Activated CD4-positive, alpha-beta memory T cell treated with anti-CD3 and anti-CD28 coated beads for 36 hours (primary cell): ENCODE measurements at regions of chr1 and their contacts with region 1.

Region 1: DNA sequence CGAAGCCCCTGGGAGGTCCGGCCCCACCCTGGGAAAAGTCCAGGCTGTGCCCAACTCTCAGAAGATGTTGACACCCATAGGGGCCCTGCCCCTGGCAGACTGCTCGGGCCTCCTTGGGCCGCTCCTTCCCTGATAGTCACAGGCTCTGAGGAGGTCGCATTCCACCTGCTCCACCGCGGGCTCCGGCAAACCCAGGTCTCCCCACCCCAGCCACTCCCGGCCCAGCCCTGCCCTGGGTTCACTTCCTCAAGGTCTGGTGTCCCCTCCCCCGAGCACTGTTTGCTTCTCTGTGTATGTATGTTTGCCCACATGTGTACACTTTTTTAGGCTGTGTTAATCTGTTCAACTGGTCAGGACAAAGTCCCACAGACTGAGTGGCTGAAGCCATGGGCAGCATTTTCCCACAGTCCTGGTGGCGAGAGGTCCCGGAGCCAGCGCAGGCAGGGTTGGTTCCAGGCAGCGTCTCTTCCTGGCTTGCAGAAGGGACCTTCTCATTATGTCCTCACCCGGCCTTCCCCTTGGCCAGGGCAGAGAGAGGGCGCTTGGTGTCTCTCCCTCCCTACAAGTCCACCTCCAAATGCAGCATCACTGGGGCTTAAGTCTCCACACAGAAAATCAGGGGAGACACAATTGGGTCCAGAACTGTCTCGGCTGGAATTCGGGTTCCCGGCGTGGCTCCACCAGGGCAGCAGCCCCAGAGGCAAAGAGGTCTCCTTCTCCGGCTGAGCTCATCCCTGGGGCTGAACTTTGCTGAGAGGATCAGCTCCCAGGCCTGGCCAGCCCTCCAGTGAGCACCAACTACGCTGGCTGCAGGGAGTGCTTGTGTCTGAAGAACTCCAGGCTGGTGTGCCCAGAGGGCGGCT is 10.5 kb upstream of the PRXL2B start:
- DNase-seq: no peak
- H3K4me3 Mint-ChIP-seq: no peak overlapping the region
- H3K27ac Mint-ChIP-seq: peak overlapping the region; percentile 97
- H3K4me1 Mint-ChIP-seq: peaks cover 39% of the 10 kb centered on the region
- H3K27me3 Mint-ChIP-seq: no peaks in the 10 kb centered on the region

Region 2: GRCh38 chr1:2391041-2391930 is 184.7 kb before region 1 on chr1 and contains the starts of genes MORN1 and RER1:
- CTCF ChIA-PET with region 1: no interaction called
- POLR2A ChIA-PET with region 1: no interaction called
- intact Hi-C with region 1: no loop called
- DNase-seq: peak; percentile 99
- H3K4me3 Mint-ChIP-seq: peak within 1 kb of the TSS; percentile 93
- H3K27ac Mint-ChIP-seq: peak within 1 kb of the TSS; percentile 84
- H3K4me1 Mint-ChIP-seq: peaks cover 39% of the 10 kb centered on the region
- H3K27me3 Mint-ChIP-seq: no peaks in the 10 kb centered on the region
- total RNA-seq, gene MORN1: 5.4 to 6.3 TPM
- total RNA-seq, gene RER1: 148 to 154 TPM

Region 3: DNA sequence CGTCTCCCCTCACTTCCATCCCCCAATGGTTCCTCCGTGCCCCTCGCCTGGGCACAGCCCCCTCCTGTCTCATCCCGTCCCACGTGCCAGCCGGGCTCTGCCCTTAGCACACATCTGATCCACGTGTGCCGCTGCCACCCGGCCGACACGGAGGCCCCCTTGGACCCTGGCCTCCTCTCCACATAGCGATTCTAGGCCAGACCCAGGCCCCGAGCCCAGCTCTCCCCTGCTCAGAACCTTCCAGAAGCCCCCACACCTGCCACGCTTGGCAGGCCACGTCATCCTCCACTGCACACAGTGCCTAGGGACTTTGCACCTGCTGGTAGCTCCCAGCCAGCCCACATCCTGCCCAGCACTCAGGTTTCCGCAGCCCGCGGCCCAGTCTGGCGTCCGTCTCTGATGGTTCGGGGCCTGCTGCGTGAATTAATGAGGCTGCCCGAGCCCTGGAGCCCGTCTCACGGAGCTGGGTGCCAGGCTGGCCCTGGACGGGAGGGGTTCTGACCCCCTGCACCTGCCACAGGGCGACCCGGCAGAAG is 79.9 kb before region 1 on chr1:
- CTCF ChIA-PET with region 1: no interaction called
- POLR2A ChIA-PET with region 1: no interaction called
- intact Hi-C with region 1: no loop called
- DNase-seq: peak; percentile 30
- H3K4me3 Mint-ChIP-seq: no peak overlapping the region
- H3K27ac Mint-ChIP-seq: no peak overlapping the region
- H3K4me1 Mint-ChIP-seq: peaks cover 27% of the 10 kb centered on the region
- H3K27me3 Mint-ChIP-seq: no peaks in the 10 kb centered on the region

Region 4: DNA sequence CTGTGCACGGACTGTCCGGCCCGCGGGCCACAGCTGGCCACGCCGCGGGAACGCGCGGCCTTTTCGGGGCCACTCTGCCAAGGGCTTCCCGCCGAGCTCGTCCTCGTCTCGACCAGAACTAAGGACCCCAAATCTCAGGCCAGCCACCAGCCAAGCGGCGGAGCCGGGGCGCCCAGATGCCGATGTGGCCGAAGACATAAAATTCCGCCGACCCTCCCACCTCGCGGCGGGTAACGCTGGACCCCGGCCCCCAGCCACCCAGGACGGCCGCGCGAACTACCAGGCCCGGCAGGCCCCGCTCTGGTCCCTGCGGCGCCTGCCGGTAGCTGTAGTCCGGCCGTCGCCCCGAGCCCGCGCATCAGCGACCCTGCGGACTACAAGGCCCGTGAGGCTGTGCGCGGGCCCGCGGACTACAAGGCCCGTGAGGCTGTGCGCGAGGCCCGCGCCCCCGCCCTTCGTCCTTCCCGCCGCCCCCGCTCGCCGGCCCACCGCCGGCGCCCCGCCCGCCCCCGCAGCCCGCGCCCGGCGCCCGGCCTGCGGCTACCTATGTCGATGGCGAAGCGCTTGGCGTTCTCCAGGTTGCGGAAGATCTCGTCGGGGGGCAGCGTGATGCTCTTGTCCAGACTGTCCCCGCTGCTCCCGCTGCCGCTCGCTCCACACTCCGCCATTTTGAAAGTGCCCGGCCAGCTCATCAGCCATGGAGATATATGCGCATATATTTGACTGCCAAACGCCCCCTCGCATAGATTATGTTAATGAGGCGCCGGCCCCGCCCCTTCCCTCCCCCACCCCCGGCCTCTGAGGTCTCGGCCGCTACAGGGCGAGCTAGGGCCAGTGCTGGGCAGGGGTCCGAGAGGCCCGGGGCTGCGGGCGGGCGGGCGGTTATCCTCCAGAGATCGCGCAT is 49.9 kb before region 1 on chr1 and contains the start of gene PANK4:
- CTCF ChIA-PET with region 1: interaction called, 3 read pairs
- POLR2A ChIA-PET with region 1: interaction called, 13 read pairs
- intact Hi-C with region 1: loop called (anchors 2 kb)
- DNase-seq: peak; percentile 92
- H3K4me3 Mint-ChIP-seq: peak within 1 kb of the TSS; percentile 85
- H3K27ac Mint-ChIP-seq: peak within 1 kb of the TSS; percentile 92
- H3K4me1 Mint-ChIP-seq: peaks cover 45% of the 10 kb centered on the region
- H3K27me3 Mint-ChIP-seq: peaks cover 5% of the 10 kb centered on the region
- total RNA-seq, gene PANK4: 42.6 to 45.1 TPM

Region 5: GRCh38 chr1:2556277-2556677 is 19.8 kb before region 1 on chr1 and contains the start of gene TNFRSF14:
- CTCF ChIA-PET with region 1: interaction called, 18 read pairs
- POLR2A ChIA-PET with region 1: interaction called, 28 read pairs
- intact Hi-C with region 1: loop called (anchors 1 kb)
- DNase-seq: peak; percentile 81
- H3K4me3 Mint-ChIP-seq: peak within 1 kb of the TSS; percentile 99
- H3K27ac Mint-ChIP-seq: peak within 1 kb of the TSS; percentile 99
- H3K4me1 Mint-ChIP-seq: peaks cover 31% of the 10 kb centered on the region
- H3K27me3 Mint-ChIP-seq: no peaks in the 10 kb centered on the region
- total RNA-seq, gene TNFRSF14: 145 to 152 TPM

Region 6: DNA sequence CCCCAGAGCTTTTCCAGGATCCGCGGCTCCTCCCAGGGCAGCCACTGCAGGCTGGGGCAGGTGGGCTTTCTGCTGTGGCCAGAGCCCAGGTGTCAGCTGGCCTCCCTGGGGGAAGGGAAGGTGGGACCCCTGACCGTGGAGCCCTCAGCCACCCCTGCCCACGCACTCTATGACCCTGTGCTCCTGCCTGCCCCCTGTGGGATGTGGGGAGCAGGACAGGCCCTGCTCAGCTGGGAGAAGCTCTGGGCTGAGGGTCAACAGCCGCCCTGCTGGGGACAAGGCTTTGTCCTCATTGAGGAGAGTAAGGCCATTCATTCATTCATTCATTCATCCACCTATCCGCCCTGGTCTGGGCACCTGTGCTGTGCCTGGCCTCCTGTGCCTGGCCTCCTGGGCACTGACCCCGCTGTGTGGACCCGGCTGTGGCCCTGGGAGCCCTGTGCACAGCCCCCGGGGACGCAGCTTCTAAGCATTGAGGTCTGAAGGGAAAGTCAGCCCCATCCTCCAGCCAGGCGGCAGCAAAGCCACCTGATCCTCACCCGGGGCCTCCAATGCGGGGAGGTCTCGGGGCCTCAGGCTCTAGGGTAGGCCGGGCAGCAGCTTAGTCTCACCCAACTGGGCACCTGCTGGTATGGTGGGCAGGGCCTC is 14.0 kb before region 1 on chr1:
- CTCF ChIA-PET with region 1: interaction called, 18 read pairs
- POLR2A ChIA-PET with region 1: interaction called, 28 read pairs
- intact Hi-C with region 1: no loop called
- DNase-seq: peak; percentile 50
- H3K4me3 Mint-ChIP-seq: no peak overlapping the region
- H3K27ac Mint-ChIP-seq: no peak overlapping the region
- H3K4me1 Mint-ChIP-seq: peaks cover 22% of the 10 kb centered on the region
- H3K27me3 Mint-ChIP-seq: no peaks in the 10 kb centered on the region